Activated naive CD8-positive, alpha-beta T cell treated with anti-CD3 and anti-CD28 coated beads, Interleukin-2, amount 10 ng/mL, durations not matched to agents 7 days and 5 days (primary cell): ENCODE measurements at regions of chr12 and their contacts with region 1.

Region 1: GRCh38 chr12:124466216-124467128 is 100.9 kb downstream of the NCOR2 start:
- DNase-seq: peak; percentile 89
- ATAC-seq: peak; percentile 99
- H3K4me3 Mint-ChIP-seq: peak overlapping the region; percentile 68
- H3K27ac Mint-ChIP-seq: peak overlapping the region; percentile 82
- H3K4me1 Mint-ChIP-seq: peaks cover 40% of the 10 kb centered on the region
- H3K27me3 Mint-ChIP-seq: no peaks in the 10 kb centered on the region

Region 2: DNA sequence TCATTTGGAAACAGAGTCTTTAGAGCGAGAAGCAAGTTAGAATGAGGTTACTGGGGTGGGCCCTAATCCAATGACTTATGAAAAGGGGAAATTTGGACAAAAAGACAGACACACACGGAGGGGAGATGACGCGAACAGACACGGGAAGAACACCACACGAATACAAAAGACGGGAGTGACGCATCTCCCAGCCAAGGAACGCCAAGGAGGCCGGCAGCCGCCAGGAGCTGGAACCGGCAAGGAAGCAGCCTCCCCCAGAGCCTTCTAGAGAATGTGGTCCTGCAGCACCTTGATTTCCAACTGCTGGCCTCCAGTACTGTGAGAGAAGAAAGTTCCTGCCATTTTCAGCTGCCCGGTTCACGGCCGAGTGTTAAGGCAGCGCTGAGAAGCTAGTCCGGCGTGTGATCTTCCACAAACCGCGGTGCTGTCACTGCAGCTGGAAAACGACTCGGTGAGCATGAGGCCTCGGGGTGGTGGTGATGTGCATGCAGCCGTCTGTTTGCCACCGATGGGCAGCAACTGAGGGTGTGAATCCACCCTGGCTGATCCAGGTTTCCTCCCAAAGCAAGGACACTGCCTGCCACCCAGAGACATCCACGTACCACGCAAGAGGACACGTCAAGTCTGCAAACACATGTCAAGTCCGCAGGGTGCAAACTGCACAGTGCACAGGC is 23.6 kb before region 1 on chr12:
- POLR2A ChIA-PET with region 1: no interaction called
- DNase-seq: no peak
- ATAC-seq: no peak
- H3K4me3 Mint-ChIP-seq: no peak overlapping the region
- H3K27ac Mint-ChIP-seq: no peak overlapping the region
- H3K4me1 Mint-ChIP-seq: peaks cover 2% of the 10 kb centered on the region
- H3K27me3 Mint-ChIP-seq: no peaks in the 10 kb centered on the region

Region 3: GRCh38 chr12:124453419-124454351 is 12.8 kb before region 1 on chr12:
- POLR2A ChIA-PET with region 1: interaction called, 36 read pairs
- DNase-seq: peak; percentile 75
- ATAC-seq: peak; percentile 85
- H3K4me3 Mint-ChIP-seq: peak overlapping the region; percentile 66
- H3K27ac Mint-ChIP-seq: peak overlapping the region; percentile 91
- H3K4me1 Mint-ChIP-seq: peaks cover 41% of the 10 kb centered on the region
- H3K27me3 Mint-ChIP-seq: no peaks in the 10 kb centered on the region